ENCODE measurements at regions of chr1 and their contacts with region 1.

Region 1: DNA sequence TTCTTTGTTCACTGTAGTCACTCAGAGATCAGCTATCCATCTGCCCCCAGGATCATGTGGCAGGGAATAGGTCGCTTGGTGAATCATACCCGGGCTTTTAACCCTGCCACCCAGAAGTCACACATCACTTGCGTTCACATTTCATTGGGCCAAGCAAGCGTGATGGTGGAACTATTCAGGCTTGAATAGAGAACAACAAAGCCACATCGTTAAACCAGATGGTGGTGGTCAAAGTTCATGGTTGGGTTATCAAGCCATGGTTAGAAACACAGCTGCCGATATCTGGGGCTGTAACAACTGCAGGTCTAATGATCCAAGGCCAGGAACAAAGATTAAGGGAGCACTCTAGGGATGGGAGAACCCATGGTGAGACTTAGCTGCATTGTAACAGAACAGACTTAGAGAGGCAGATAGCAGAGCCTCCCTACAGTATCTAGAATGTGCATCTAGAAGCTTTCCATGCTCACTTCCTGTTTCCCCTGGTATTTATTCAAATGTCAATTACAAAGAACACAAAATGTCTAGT is 40.0 kb upstream of the PTPRC start:
- DNase-seq: peak; percentile 99
- H3K4me3 ChIP-seq: peak overlapping the region; percentile 76
- H3K27ac ChIP-seq: peak overlapping the region; percentile 90
- H3K4me1 ChIP-seq: peaks cover 53% of the 10 kb centered on the region
- CTCF ChIP-seq: 0 out of 2 replicates have a peak, but pooled peaks have one; percentile 14

Region 2: GRCh38 chr1:198534548-198535418 is 64.1 kb before region 1 on chr1:
- CTCF ChIA-PET with region 1: no interaction called
- POLR2A ChIA-PET with region 1: interaction called, 22 read pairs
- intact Hi-C with region 1: loop called (anchors 2 kb)
- DNase-seq: peak; percentile 29
- H3K4me3 ChIP-seq: peak overlapping the region; percentile 14
- H3K27ac ChIP-seq: peak overlapping the region; percentile 41
- H3K4me1 ChIP-seq: peaks cover 62% of the 10 kb centered on the region
- CTCF ChIP-seq: no peak

Region 3: GRCh38 chr1:198556971-198557370 is 41.9 kb before region 1 on chr1:
- CTCF ChIA-PET with region 1: no interaction called
- POLR2A ChIA-PET with region 1: interaction called, 3 read pairs
- intact Hi-C with region 1: loop called (anchors 2 kb)
- DNase-seq: peak; percentile 92
- H3K4me3 ChIP-seq: peak overlapping the region; percentile 28
- H3K27ac ChIP-seq: peak overlapping the region; percentile 32
- H3K4me1 ChIP-seq: peaks cover 31% of the 10 kb centered on the region
- CTCF ChIP-seq: no peak

Region 4: GRCh38 chr1:198588845-198589244 is 10.0 kb before region 1 on chr1:
- CTCF ChIA-PET with region 1: no interaction called
- POLR2A ChIA-PET with region 1: interaction called, 13 read pairs
- intact Hi-C with region 1: no loop called
- DNase-seq: no peak
- H3K4me3 ChIP-seq: no peak overlapping the region
- H3K27ac ChIP-seq: no peak overlapping the region
- H3K4me1 ChIP-seq: no peaks in the 10 kb centered on the region
- CTCF ChIP-seq: no peak

Region 5: GRCh38 chr1:198651650-198652400 is 53.0 kb after region 1 on chr1:
- CTCF ChIA-PET with region 1: interaction called, 3 read pairs
- POLR2A ChIA-PET with region 1: interaction called, 16 read pairs
- intact Hi-C with region 1: no loop called
- DNase-seq: peak; percentile 65
- H3K4me3 ChIP-seq: peak overlapping the region; percentile 62
- H3K27ac ChIP-seq: peak overlapping the region; percentile 87
- H3K4me1 ChIP-seq: peaks cover 98% of the 10 kb centered on the region
- CTCF ChIP-seq: no peak

Region 6: DNA sequence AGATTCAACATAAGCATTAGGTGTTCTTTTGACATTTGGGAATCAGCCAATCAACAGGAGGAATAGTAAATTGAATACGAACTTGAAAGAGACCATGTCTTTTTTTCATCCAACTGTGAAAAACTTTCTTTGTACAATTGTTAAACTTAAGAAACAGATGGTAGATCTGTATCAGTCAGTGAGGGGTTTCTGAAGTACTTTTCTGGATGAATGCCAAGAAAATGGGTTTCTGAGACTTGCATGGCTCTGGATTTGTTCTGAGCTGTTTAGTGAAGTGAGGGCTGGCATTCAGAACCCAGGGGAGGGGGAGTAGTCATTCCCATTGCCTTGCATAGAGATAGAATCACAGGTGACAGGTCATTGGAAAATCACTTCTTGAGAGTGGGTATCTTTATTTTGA is 77.4 kb after region 1 on chr1:
- CTCF ChIA-PET with region 1: no interaction called
- POLR2A ChIA-PET with region 1: interaction called, 66 read pairs
- intact Hi-C with region 1: no loop called
- DNase-seq: peak; percentile 57
- H3K4me3 ChIP-seq: peak overlapping the region; percentile 51
- H3K27ac ChIP-seq: peak overlapping the region; percentile 99
- H3K4me1 ChIP-seq: peaks cover 96% of the 10 kb centered on the region
- CTCF ChIP-seq: no peak

Region 7: GRCh38 chr1:198845851-198846250 is 247.0 kb after region 1 on chr1:
- CTCF ChIA-PET with region 1: no interaction called
- POLR2A ChIA-PET with region 1: no interaction called
- intact Hi-C with region 1: no loop called
- DNase-seq: no peak
- H3K4me3 ChIP-seq: no peak overlapping the region
- H3K27ac ChIP-seq: no peak overlapping the region
- H3K4me1 ChIP-seq: no peaks in the 10 kb centered on the region
- CTCF ChIP-seq: no peak

Region 8: DNA sequence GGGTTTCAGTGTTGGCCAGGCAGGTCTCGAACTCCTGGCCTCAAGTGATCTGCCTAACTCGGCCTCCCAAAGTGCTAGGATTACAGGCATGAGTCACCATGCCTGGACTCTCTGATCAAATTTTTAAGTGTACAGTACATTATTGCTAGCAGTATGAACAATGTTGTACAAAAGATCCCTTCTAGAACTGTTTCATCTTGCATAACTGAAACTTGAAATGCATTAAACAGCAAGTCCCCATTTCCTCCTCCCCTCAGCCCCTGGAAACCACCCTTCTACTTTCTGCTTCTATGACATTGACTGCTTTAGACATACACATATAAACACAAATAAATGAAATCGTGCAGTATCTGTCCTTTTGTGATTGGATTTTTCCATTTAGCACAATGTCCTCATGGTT is 503.4 kb after region 1 on chr1:
- CTCF ChIA-PET with region 1: no interaction called
- POLR2A ChIA-PET with region 1: no interaction called
- intact Hi-C with region 1: no loop called
- DNase-seq: no peak
- H3K4me3 ChIP-seq: no peak overlapping the region
- H3K27ac ChIP-seq: no peak overlapping the region
- H3K4me1 ChIP-seq: no peaks in the 10 kb centered on the region
- CTCF ChIP-seq: no peak